Activated CD4-positive, alpha-beta T cell treated with anti-CD3 and anti-CD28 coated beads, Interleukin-2, amount 10 ng/mL, durations not matched to agents 24 days and 14 days (primary cell): ENCODE measurements at regions of chr9 and their contacts with region 1.

Region 1: DNA sequence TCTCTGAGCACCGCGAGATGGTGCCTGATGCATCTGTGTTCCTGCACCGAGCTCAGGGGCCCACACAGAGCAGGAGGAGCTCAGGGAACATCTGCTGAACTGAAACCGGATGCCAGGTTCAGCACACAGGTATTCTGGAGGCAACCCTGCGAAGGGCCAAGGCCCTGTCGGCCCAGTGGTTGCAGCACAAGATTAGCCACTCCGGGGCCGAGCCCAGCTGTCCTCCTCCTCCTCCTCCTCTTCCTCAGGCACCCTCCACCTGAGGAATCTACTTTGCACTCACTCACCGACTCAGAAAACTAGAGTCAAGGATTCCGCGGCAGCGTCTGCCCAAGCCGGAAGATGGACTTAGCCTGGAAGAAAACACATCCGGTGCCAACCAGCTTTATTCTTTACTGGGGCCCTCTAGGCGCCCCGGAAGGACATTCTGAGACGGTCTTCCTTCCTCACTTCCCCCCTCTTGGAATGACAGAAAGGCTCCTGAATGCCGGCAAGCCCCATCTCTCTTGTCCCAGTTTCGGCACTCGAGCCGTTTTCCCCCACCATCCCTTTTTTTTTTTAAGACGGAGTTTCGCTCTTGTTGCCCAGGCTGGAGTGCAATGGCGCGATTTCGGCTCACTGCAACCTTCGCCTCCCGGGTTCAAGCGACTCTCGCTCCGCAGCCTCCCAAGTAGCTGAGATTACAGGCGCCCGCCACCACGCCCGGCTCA is at the start of gene ZBTB6:
- DNase-seq: peak; percentile 91
- H3K4me3 Mint-ChIP-seq: peak within 1 kb of the TSS; percentile 91
- H3K27ac Mint-ChIP-seq: peak within 1 kb of the TSS; percentile 97
- H3K4me1 Mint-ChIP-seq: peaks cover 17% of the 10 kb centered on the region
- H3K27me3 Mint-ChIP-seq: no peaks in the 10 kb centered on the region
- total RNA-seq, gene ZBTB6: 10.7 and 11.6 TPM in 2 replicates

Region 2: GRCh38 chr9:122816163-122816867 is 96.8 kb before region 1 on chr9:
- intact Hi-C with region 1: no loop called
- DNase-seq: peak; percentile 83
- H3K4me3 Mint-ChIP-seq: peak overlapping the region; percentile 75
- H3K27ac Mint-ChIP-seq: peak overlapping the region; percentile 81
- H3K4me1 Mint-ChIP-seq: peaks cover 25% of the 10 kb centered on the region
- H3K27me3 Mint-ChIP-seq: no peaks in the 10 kb centered on the region

Region 3: DNA sequence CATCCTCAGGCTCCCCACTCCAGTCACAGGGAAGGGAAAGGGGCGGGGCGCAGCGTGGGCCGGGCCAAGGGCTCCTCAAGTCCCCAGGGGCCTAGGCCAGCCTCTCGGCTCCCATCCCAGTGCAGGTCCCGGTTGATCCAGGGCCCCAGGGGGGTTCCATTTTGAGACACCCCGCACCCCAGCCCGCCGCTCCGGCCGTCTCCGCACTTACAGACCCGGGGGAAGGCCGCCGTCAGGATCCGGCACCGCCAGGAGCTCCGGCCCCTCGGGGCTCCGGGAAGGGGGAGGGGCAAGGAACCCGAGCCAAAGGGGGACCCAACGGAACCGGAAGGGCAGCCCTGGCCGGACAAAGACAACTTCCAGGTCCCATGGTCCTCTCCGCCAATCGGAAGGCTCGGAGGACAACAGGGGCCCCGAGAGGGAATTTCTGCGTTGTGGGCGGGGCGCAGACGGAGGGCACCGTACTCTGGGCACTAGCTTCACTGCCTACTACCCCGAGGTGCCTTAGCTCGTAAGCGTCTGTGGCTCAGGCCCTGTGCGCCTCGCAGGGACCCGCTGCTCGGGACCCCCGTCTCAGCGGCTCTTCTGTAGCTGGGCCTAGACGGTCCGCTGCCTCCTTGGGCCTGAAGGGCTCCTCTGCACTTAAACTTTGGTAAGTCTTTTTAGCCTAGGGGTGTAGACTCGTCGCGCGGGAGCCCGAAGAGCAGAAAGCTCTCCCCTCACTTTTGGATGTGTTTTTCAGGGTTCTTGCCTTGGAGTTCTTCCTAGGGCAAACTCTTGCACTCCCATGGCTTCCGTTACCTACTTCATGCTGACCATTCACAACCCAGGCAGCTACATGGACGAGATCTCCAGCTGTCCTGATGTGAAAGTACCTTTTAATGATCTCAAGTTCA is 18.4 kb after region 1 on chr9 and contains the start of gene ZBTB26:
- intact Hi-C with region 1: loop called (anchors 1 kb)
- DNase-seq: peak; percentile 96
- H3K4me3 Mint-ChIP-seq: no peak within 1 kb of the TSS
- H3K27ac Mint-ChIP-seq: peak within 1 kb of the TSS; percentile 91
- H3K4me1 Mint-ChIP-seq: peaks cover 11% of the 10 kb centered on the region
- H3K27me3 Mint-ChIP-seq: no peaks in the 10 kb centered on the region
- total RNA-seq, gene ZBTB26: 8.4 and 8.9 TPM in 2 replicates

Region 4: GRCh38 chr9:122991370-122991830 is 78.3 kb after region 1 on chr9:
- intact Hi-C with region 1: loop called (anchors 2 kb)
- DNase-seq: peak; percentile 71
- H3K4me3 Mint-ChIP-seq: no peak overlapping the region
- H3K27ac Mint-ChIP-seq: peak overlapping the region; percentile 17
- H3K4me1 Mint-ChIP-seq: peaks cover 3% of the 10 kb centered on the region
- H3K27me3 Mint-ChIP-seq: no peaks in the 10 kb centered on the region